H1 (cell line): ENCODE measurements at regions of chr1 and their contacts with region 1.

Region 1: DNA sequence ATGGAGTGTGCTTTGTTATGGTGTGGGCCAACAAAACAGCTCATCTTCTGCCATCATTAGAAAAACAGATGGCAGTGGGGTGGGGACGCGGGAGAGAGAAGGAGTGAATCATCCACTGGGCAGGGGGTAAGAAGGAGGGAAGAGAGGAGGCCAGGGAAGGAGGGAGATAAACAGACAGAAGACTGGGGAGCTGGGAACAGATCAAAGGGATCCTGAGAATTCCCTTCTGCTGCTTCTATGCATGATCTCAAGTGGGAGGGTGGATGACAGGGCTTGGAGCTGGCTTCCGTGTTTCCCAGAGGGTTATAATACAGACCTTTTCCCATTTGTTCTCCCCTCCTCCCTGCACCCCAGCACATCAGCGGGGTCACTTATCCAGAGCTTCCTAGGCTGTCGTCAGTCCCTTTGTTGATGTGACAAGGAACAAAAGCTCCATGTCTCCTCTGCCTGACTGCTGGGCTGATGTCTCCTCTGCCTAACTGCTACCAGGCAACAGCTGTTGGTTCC is 338.6 kb downstream of the PAPPA2 start:
- DNase-seq: no peak
- H3K4me3 ChIP-seq: no peak overlapping the region
- H3K27ac ChIP-seq: no peak overlapping the region
- H3K4me1 ChIP-seq: peaks cover 0 to 4% (median 3%) of the 10 kb centered on the region in 4 experiments; a peak in 3 of 7 replicates
- H3K27me3 ChIP-seq: no peaks in the 10 kb centered on the region
- CTCF ChIP-seq: no peak
- EP300 ChIP-seq: no peak
- POLR2A ChIP-seq: no peak
- RAD21 ChIP-seq: no peak

Region 2: DNA sequence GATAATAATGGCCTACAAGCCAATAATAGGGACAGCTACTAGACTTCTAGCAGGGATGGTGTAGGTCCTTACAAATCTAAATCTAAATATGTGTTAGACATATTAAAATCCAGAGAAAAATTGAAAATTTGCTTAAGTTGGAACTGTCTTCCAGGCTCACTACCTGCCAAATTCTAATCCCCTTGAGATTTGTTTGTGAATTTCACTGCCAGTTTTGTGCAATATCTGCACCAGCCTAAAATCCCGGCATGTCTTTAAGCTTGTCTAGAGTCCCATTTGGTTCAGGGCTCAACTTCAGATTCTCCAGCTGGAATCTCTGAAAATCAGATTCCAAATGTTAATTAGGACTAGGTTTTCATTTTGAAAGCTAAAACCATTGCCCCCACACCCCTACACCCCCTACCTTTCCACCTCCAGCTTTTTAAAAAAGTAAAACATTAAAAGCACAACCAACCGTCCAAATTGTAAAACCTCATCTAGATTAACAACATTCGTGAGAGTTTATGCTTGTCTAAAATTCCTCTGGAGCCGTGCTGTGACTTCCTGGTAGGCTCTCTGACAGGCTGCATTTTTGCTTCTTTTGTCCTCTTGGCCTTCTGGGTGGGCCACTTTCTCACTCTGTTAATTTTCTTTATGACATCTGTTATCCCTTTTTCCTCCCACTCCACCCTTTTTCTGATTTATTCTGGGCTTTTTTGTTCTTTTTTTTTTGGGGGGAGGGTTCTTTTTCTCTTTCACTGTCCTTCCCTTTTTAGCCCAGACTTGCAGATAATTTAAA is 10.1 kb after region 1 on chr1:
- CTCF ChIA-PET with region 1: interaction called, 10 read pairs
- POLR2A ChIA-PET with region 1: no interaction called
- DNase-seq: no peak
- H3K4me3 ChIP-seq: no peak overlapping the region
- H3K27ac ChIP-seq: no peak overlapping the region
- H3K4me1 ChIP-seq: peaks cover 0 to 8% (median 2%) of the 10 kb centered on the region in 4 experiments; a peak in 3 of 7 replicates
- H3K27me3 ChIP-seq: no peaks in the 10 kb centered on the region
- CTCF ChIP-seq: no peak
- EP300 ChIP-seq: no peak
- POLR2A ChIP-seq: no peak
- RAD21 ChIP-seq: no peak